ENCODE measurements at regions of chr2 and their contacts with region 1.

Region 1: GRCh38 chr2:127324635-127325034 is 30.7 kb upstream of the ERCC3 start:
- DNase-seq: peak; percentile 41 to 74 (median 63)
- H3K4me3 ChIP-seq: no peak overlapping the region
- H3K27ac ChIP-seq: no peak overlapping the region
- H3K4me1 ChIP-seq: no peaks in the 10 kb centered on the region
- H3K27me3 ChIP-seq: no peaks in the 10 kb centered on the region

Region 2: DNA sequence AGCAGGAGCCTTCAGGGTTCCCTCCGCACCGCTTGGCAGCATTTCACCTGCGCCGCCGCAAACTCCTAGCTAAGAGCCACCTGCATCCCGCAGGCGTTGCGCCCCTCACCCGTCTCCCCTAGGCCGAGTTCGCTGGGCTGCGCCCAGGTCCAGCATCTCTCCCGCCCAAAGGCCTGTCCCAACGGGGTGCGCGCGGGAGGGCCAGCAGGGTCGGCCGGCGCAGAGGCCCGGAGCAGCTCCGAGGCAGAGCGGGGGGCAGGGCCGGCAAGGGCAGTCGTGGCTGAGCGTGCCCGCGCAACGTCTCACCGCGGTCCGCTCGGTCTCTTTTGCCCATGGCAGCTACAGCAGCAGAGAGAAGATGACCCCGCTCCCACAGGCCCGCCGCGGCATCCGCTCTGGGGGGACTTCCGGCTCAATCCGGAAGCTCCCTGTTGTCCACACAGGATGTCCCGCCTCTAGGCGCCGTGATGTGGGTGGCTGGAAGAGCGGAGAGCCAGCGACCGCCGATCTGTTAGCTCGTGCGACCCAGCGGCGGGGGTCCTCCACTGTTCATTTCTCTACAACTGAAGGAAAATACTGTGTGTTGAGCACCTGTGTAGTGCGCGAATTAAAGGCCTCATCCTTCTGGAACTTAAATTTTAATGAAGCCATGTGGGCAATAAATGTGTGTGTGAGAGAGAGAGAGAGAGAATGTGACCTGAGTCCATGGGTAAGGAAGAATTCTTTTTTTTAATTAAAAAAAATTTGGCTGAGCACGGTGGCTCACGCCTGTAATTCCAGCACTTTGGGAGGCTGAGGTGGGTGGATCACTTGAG is 30.7 kb before region 1 on chr2 and contains the start of gene ERCC3:
- CTCF ChIA-PET with region 1: interaction called, 10 read pairs
- POLR2A ChIA-PET with region 1: no interaction called
- DNase-seq: peak; percentile 83 to 88 (median 84)
- H3K4me3 ChIP-seq: peak within 1 kb of the TSS; percentile 78 to 98 (median 89)
- H3K27ac ChIP-seq: peak within 1 kb of the TSS; percentile 77 to 81
- H3K4me1 ChIP-seq: peaks cover 0 to 17% (median 11%) of the 10 kb centered on the region in 4 experiments
- H3K27me3 ChIP-seq: no peaks in the 10 kb centered on the region

Region 3: GRCh38 chr2:127313406-127313805 is 11.2 kb before region 1 on chr2:
- CTCF ChIA-PET with region 1: interaction called, 11 read pairs
- POLR2A ChIA-PET with region 1: no interaction called
- DNase-seq: no peak
- H3K4me3 ChIP-seq: no peak overlapping the region
- H3K27ac ChIP-seq: no peak overlapping the region
- H3K4me1 ChIP-seq: no peaks in the 10 kb centered on the region
- H3K27me3 ChIP-seq: no peaks in the 10 kb centered on the region

Region 4: DNA sequence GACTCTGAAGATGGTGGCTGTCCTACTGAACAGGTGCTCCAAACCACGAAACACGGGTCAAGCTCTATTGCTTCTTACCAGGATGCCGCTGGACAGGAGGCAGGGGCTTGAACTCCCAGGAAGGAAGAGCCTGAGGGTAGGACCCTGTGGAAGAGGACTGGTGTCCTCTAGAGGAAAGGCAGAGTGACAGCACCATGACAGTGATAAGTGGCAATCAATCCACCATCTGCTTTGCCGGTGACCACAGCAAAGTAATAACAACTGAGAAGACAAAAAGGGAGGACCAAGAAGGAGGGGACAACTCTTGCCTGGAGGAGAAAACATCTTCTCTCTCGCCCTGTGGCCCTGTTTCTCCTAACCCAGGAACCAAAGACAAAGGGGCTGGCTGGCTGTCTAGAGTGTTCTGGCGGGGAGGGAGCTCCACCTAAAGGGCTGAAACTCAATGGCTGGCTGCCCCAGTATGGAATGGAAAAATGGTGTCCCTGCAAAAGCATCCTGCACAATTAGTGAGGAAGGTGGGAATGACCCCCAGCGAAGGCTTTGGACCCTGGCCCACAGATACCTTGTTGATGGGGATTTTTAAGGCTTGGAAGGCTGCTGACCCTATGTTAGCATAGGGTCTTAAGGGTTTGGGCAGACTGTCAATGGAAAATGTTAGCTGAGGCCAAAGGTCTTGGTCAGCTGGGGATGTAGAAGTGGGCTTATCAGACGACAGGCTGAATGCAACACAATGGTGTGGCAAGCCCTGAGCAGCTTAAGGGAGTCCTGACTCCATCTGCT is 128.9 kb after region 1 on chr2:
- CTCF ChIA-PET with region 1: interaction called, 14 read pairs
- POLR2A ChIA-PET with region 1: no interaction called
- DNase-seq: peak; percentile 7 to 28 (median 10)
- H3K4me3 ChIP-seq: no peak overlapping the region
- H3K27ac ChIP-seq: no peak overlapping the region
- H3K4me1 ChIP-seq: no peaks in the 10 kb centered on the region
- H3K27me3 ChIP-seq: no peaks in the 10 kb centered on the region

Measured in common myeloid progenitor, CD34-positive (primary cell).